ENCODE measurements at regions of chr9 and their contacts with region 1.

Region 1: GRCh38 chr9:129944506-129945116 is 98.4 kb downstream of the FNBP1 start:
- DNase-seq: peak; percentile 37 to 87
- ATAC-seq: peak; percentile 91 to 94 (median 93)
- H3K4me3 ChIP-seq: no peak overlapping the region
- H3K4me3 Mint-ChIP-seq: peak overlapping the region; percentile 71
- H3K27ac ChIP-seq: peak overlapping the region; percentile 92
- H3K27ac Mint-ChIP-seq: peak overlapping the region; percentile 81 to 93
- H3K4me1 ChIP-seq: peaks cover 30% of the 10 kb centered on the region
- H3K4me1 Mint-ChIP-seq: peaks cover 47 to 52% of the 10 kb centered on the region in 2 donors
- H3K27me3 ChIP-seq: no peaks in the 10 kb centered on the region
- H3K27me3 Mint-ChIP-seq: no peaks in the 10 kb centered on the region
- CTCF ChIP-seq: no peak

Region 2: DNA sequence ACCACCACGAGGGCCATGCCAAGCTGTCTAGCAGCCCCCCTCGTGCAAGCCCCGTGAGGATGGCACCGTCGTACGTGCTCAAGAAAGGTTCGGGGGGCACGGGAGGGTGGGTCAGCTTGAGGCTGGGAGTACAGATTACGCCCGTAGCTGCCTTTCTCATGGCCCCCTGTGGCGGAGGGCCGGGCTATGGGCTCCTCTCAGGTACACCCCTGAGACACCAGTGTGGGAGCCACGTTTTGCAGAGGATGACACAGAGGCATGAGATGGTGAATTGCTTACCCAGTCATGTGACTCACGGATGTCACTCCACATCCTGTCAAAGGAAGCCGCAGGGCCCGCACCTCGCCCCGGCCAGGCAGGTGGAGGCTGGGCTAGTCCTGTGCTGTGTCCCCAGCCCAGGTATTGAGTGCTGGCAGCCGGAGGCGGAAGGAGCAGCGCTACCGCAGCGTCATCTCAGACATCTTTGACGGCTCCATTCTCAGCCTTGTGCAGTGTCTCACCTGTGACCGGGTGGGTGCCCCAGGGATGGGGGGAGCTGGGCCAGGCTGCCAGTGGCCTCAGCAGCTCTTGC is 75.6 kb before region 1 on chr9:
- intact Hi-C with region 1: no loop called
- DNase-seq: peak; percentile 85 to 96
- ATAC-seq: peak; percentile 87 to 93 (median 92)
- H3K4me3 ChIP-seq: peak overlapping the region; percentile 5
- H3K4me3 Mint-ChIP-seq: peak overlapping the region; percentile 65
- H3K27ac ChIP-seq: peak overlapping the region; percentile 85
- H3K27ac Mint-ChIP-seq: peak overlapping the region; percentile 85 to 92
- H3K4me1 ChIP-seq: peaks cover 51% of the 10 kb centered on the region
- H3K4me1 Mint-ChIP-seq: peaks cover 50 to 57% of the 10 kb centered on the region in 2 donors
- H3K27me3 ChIP-seq: no peaks in the 10 kb centered on the region
- H3K27me3 Mint-ChIP-seq: no peaks in the 10 kb centered on the region
- CTCF ChIP-seq: no peak

Region 3: GRCh38 chr9:129962889-129963703 is 18.5 kb after region 1 on chr9:
- intact Hi-C with region 1: loop called (anchors 2 kb)
- DNase-seq: peak; percentile 52 to 93
- ATAC-seq: peak; percentile 96 to 97 (median 97)
- H3K4me3 ChIP-seq: peak overlapping the region; percentile 48
- H3K4me3 Mint-ChIP-seq: peak overlapping the region; percentile 91
- H3K27ac ChIP-seq: peak overlapping the region; percentile 95
- H3K27ac Mint-ChIP-seq: peak overlapping the region; percentile 95 to 98
- H3K4me1 ChIP-seq: peaks cover 28% of the 10 kb centered on the region
- H3K4me1 Mint-ChIP-seq: peaks cover 54 to 65% of the 10 kb centered on the region in 2 donors
- H3K27me3 ChIP-seq: no peaks in the 10 kb centered on the region
- H3K27me3 Mint-ChIP-seq: no peaks in the 10 kb centered on the region
- CTCF ChIP-seq: no peak

Region 4: GRCh38 chr9:129995409-129996160 is 51.0 kb after region 1 on chr9:
- intact Hi-C with region 1: loop called (anchors 5 kb)
- DNase-seq: peak in 1 of 2 donors; percentile 55
- ATAC-seq: peak; percentile 43 to 60 (median 56)
- H3K4me3 ChIP-seq: no peak overlapping the region
- H3K4me3 Mint-ChIP-seq: peak overlapping the region; percentile 49
- H3K27ac ChIP-seq: peak overlapping the region; percentile 53
- H3K27ac Mint-ChIP-seq: peak overlapping the region; percentile 81 to 82
- H3K4me1 ChIP-seq: peaks cover 56% of the 10 kb centered on the region
- H3K4me1 Mint-ChIP-seq: peaks cover 49 to 55% of the 10 kb centered on the region in 2 donors
- H3K27me3 ChIP-seq: no peaks in the 10 kb centered on the region
- H3K27me3 Mint-ChIP-seq: no peaks in the 10 kb centered on the region
- CTCF ChIP-seq: no peak

Region 5: DNA sequence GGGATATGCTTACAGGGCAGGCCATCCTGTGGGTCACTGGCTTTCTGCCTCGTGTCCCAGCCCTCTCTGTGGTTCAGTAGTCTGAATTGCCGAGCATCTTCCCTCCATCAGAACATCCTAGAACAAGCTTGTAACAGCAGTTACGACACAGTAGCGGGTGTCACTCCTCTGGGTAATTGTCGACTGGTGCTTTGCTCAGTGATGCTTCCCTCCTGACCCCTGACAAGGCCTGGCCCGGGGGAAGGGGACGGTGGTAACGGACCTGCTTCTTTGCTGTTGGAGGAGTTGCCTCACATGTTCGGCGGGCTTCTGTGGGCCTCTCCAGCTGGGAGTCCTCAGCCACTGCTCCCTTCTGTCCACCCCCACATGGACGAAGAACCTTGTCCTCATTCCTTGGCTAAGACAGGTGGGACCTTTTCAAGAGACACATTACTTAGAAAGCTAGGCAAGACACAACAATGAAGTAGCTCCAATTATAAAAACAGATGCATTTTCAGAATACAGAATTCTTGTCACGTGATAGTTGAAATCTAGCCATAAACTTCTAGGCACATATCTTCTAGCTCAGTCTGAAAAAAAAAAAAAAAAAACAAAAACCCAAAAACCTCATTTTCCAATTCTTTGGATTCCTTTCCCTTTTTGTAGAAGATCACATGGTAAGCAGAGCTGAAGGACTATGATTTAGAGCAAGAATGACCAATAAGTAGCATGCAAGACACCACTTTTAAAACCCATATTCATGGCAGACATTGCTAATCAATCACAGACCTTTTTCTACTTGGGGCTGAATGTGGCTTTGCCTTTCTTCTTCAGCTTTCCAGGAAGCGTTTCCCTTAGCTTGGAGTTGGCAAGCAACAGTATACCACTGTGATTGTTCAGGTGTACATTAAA is 345.9 kb after region 1 on chr9:
- intact Hi-C with region 1: no loop called
- DNase-seq: no peak
- ATAC-seq: no peak
- H3K4me3 ChIP-seq: no peak overlapping the region
- H3K4me3 Mint-ChIP-seq: no peak overlapping the region
- H3K27ac ChIP-seq: no peak overlapping the region
- H3K27ac Mint-ChIP-seq: no peak overlapping the region
- H3K4me1 ChIP-seq: no peaks in the 10 kb centered on the region
- H3K4me1 Mint-ChIP-seq: peaks cover 0 to 4% of the 10 kb centered on the region in 2 donors
- H3K27me3 ChIP-seq: no peaks in the 10 kb centered on the region
- H3K27me3 Mint-ChIP-seq: peaks cover 25 to 51% of the 10 kb centered on the region in 2 donors
- CTCF ChIP-seq: no peak

Measured in natural killer cell (primary cell).